Mammary epithelial cell (primary cell): ENCODE measurements at regions of chrX and their contacts with region 1.

Region 1: DNA sequence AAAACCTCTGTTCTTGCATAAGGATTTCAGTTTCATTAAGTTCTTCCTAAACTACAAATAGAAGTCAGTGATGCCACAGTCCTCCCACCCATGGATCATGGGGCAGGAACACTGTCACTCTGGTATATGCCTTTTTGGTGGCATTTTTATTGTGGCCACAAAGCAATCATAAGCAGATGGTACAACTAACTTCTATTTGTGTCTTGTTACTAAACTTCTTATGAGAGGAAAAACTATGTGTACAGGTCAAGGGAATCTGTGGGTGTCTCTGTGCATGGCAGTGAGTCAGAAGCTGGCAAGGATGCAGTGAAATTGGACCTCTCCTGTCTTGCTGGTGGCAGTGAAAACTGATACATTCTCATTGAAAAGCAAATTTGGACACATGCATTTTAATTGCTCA is 245.0 kb upstream of the GPC4 start:
- DNase-seq: peak; percentile 48
- H3K4me3 ChIP-seq: no peak overlapping the region
- H3K27ac ChIP-seq: no peak overlapping the region
- H3K4me1 ChIP-seq: no peaks in the 10 kb centered on the region
- H3K27me3 ChIP-seq: no peaks in the 10 kb centered on the region
- CTCF ChIP-seq: no peak

Region 2: GRCh38 chrX:133415276-133416105 is 244.8 kb before region 1 on chrX and contains the start of gene GPC4:
- CTCF ChIA-PET with region 1: no interaction called
- dilution Hi-C with region 1: no loop called
- in situ Hi-C with region 1: no loop called
- intact Hi-C with region 1: loop called (anchors 2 kb)
- DNase-seq: peak; percentile 49
- H3K4me3 ChIP-seq: peak within 1 kb of the TSS; percentile 31 to 56 (median 55)
- H3K27ac ChIP-seq: no peak within 1 kb of the TSS
- H3K4me1 ChIP-seq: no peaks in the 10 kb centered on the region
- H3K27me3 ChIP-seq: peaks cover 10% of the 10 kb centered on the region
- CTCF ChIP-seq: no peak
- total RNA-seq, gene GPC4: 7.1 to 7.2 TPM

Region 3: DNA sequence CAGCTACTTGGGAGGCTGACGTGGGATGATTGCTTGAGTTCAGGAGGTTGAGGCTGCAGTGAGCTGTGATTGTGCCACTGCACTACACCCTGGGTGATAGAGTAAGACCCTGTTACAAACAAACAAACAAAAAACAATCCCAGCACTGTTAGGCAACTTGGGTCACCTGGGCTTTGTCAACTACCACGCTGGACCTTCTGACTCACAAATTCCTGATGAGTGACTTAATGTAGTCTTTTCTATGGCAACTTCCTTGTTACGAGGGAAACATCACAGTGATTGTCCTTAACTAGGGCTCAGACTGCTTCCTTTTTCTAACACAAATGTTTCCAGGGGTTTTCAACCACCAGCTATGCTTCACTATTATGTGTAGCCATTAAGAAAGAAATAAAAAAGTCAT is 116.2 kb before region 1 on chrX:
- CTCF ChIA-PET with region 1: no interaction called
- dilution Hi-C with region 1: no loop called
- in situ Hi-C with region 1: no loop called
- intact Hi-C with region 1: loop called (anchors 10 kb)
- DNase-seq: peak; percentile 78
- H3K4me3 ChIP-seq: no peak overlapping the region
- H3K27ac ChIP-seq: peak overlapping the region; percentile 68
- H3K4me1 ChIP-seq: no peaks in the 10 kb centered on the region
- H3K27me3 ChIP-seq: no peaks in the 10 kb centered on the region
- CTCF ChIP-seq: no peak

Region 4: DNA sequence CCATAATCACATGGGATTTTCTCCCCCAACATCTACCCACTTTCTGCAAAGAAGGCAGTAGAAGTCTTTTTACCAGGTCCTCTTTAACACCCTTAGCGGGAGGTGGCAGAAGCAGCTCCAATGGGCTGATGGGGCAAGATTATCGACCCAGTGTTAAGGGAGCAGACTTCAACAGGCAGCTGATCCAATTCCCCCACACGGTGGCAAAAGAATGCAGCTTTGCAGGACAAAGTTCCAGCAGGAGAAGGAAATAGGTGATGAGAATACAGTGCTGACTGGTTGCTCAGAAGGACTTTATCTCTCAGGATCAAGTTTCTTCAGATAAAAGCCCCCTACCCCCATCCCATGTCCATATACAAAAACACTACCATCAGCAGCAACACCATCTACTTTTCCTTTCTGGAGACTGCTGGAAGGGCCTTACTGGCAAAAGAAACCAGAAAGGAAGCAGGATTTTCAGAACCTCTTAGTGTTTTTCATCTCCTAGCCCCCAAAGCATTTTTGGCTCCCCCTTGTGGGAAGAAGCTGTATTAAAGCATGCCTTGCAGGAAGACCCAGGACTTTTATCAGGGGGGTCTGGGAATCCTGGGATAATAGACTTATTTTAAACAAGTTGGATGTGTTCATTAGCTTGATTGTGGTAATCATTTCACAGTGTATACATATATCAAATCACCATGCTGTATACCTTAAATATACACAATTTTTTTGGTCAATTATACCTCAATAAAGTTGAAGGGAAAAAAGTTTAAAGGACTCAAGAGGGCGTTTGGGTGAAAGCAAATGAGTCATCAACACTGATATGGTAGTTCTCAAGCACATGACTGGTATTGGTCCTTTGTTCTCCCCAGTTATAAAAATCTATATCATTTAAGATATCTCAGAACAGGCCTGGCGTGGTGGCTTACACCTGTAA is 178.7 kb after region 1 on chrX:
- CTCF ChIA-PET with region 1: no interaction called
- dilution Hi-C with region 1: no loop called
- in situ Hi-C with region 1: no loop called
- intact Hi-C with region 1: no loop called
- DNase-seq: peak; percentile 10
- H3K4me3 ChIP-seq: no peak overlapping the region
- H3K27ac ChIP-seq: no peak overlapping the region
- H3K4me1 ChIP-seq: no peaks in the 10 kb centered on the region
- H3K27me3 ChIP-seq: peaks cover 3% of the 10 kb centered on the region
- CTCF ChIP-seq: peak; percentile 68

Region 5: GRCh38 chrX:133921764-133922389 is 261.6 kb after region 1 on chrX:
- CTCF ChIA-PET with region 1: no interaction called
- dilution Hi-C with region 1: no loop called
- in situ Hi-C with region 1: no loop called
- intact Hi-C with region 1: no loop called
- DNase-seq: peak; percentile 28
- H3K4me3 ChIP-seq: no peak overlapping the region
- H3K27ac ChIP-seq: no peak overlapping the region
- H3K4me1 ChIP-seq: no peaks in the 10 kb centered on the region
- H3K27me3 ChIP-seq: no peaks in the 10 kb centered on the region
- CTCF ChIP-seq: peak; percentile 66 to 85

Region 6: GRCh38 chrX:134236626-134237614 is 576.6 kb after region 1 on chrX and contains the start of gene CCDC160:
- CTCF ChIA-PET with region 1: no interaction called
- dilution Hi-C with region 1: no loop called
- in situ Hi-C with region 1: no loop called
- intact Hi-C with region 1: no loop called
- DNase-seq: no peak
- H3K4me3 ChIP-seq: peak within 1 kb of the TSS in 2 of 3 experiments; percentile 36 to 38
- H3K27ac ChIP-seq: no peak within 1 kb of the TSS
- H3K4me1 ChIP-seq: no peaks in the 10 kb centered on the region
- H3K27me3 ChIP-seq: no peaks in the 10 kb centered on the region
- CTCF ChIP-seq: no peak
- total RNA-seq, gene CCDC160: under 0.01 TPM in 1 of 2 donors, not detected in the other